ENCODE measurements at regions of chr13 and their contacts with region 1.

Region 1: GRCh38 chr13:35789335-35790165 is 313.1 kb upstream of the MAB21L1 start:
- DNase-seq: peak; percentile 43
- H3K4me3 ChIP-seq: no peak overlapping the region
- H3K27ac ChIP-seq: no peak overlapping the region
- H3K4me1 ChIP-seq: no peaks in the 10 kb centered on the region
- H3K27me3 ChIP-seq: no peaks in the 10 kb centered on the region
- CTCF ChIP-seq: peak; percentile 66

Region 2: GRCh38 chr13:35630551-35631275 is 158.8 kb before region 1 on chr13:
- CTCF ChIA-PET with region 1: no interaction called
- POLR2A ChIA-PET with region 1: no interaction called
- intact Hi-C with region 1: loop called (anchors 10 kb)
- DNase-seq: peak; percentile 66
- H3K4me3 ChIP-seq: no peak overlapping the region
- H3K27ac ChIP-seq: no peak overlapping the region
- H3K4me1 ChIP-seq: no peaks in the 10 kb centered on the region
- H3K27me3 ChIP-seq: no peaks in the 10 kb centered on the region
- CTCF ChIP-seq: peak; percentile 79

Region 3: GRCh38 chr13:35675651-35676050 is 113.9 kb before region 1 on chr13:
- CTCF ChIA-PET with region 1: interaction called, 10 read pairs
- POLR2A ChIA-PET with region 1: no interaction called
- intact Hi-C with region 1: no loop called
- DNase-seq: no peak
- H3K4me3 ChIP-seq: no peak overlapping the region
- H3K27ac ChIP-seq: no peak overlapping the region
- H3K4me1 ChIP-seq: no peaks in the 10 kb centered on the region
- H3K27me3 ChIP-seq: no peaks in the 10 kb centered on the region
- CTCF ChIP-seq: no peak

Region 4: DNA sequence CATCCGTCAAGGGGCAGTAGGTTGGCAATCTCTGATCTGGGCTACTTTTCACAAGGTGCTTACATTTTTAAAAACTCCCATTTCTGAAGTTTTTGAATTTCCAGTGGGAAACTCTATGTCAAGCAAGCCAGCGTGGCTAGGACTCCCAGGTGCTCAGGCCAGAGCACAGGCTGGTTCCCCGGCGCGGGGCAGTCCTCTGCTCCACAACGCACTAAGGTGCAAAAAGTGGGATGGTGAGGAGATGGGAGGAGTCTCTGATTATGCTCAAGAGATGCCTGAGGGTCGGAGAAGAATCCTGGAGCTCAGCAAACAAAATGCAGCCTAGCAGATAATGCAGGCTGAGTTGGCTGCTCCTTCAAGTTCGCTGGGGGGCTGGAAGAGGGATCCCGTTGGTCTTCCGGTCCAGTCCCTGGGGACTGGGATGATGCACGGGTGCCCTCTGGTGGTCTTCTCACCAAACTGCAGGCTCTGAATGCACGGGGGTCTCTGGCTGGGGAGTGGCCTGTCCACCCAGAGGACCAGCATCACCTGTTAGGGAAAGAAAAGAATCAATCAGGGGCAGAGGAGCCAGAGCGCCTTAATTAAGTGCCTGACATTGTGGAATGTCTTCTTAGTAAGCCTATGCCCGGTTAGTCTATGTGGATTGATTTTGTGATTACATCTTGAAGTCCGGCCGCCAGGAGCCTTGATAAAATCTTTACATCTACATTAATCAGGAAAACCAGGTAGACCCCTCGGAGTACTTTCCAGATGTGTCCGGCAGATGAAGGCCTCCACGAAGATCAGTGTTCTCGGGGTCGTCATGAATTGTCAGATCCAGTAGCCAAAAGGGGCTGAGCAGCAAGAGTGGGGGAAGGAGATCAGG is 68.6 kb before region 1 on chr13:
- CTCF ChIA-PET with region 1: no interaction called
- POLR2A ChIA-PET with region 1: no interaction called
- intact Hi-C with region 1: no loop called
- DNase-seq: peak; percentile 74
- H3K4me3 ChIP-seq: no peak overlapping the region
- H3K27ac ChIP-seq: no peak overlapping the region
- H3K4me1 ChIP-seq: no peaks in the 10 kb centered on the region
- H3K27me3 ChIP-seq: no peaks in the 10 kb centered on the region
- CTCF ChIP-seq: peak; percentile 95

Region 5: GRCh38 chr13:36412736-36413135 is 623.2 kb after region 1 on chr13:
- CTCF ChIA-PET with region 1: no interaction called
- POLR2A ChIA-PET with region 1: no interaction called
- intact Hi-C with region 1: no loop called
- DNase-seq: no peak
- H3K4me3 ChIP-seq: no peak overlapping the region
- H3K27ac ChIP-seq: no peak overlapping the region
- H3K4me1 ChIP-seq: peaks cover 8% of the 10 kb centered on the region
- H3K27me3 ChIP-seq: no peaks in the 10 kb centered on the region
- CTCF ChIP-seq: no peak